ENCODE measurements at regions of chr7 and their contacts with region 1.

Region 1: DNA sequence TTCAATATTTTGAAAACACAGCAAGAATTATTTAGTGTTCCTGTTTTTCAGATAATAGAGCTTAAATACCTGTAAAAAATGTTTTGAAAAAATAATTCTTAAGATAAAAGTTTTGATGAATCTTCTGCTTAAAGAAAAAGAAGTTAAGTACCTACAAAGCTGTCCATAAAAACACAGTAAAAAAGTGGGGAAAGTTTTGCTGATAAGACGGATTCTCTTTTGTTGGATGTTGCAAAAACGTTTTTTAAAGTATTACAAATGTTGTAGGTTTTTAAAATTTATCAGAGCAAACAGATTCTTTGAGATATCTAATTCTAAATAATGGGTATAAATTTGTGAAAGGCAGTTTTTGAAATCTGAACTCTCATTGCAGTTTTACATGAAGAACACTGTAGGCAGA is 12.2 kb downstream of the DMTF1 start:
- DNase-seq: no peak
- ATAC-seq: no peak
- H3K4me3 ChIP-seq: no peak overlapping the region
- H3K27ac ChIP-seq: no peak overlapping the region
- H3K4me1 ChIP-seq: no peaks in the 10 kb centered on the region
- H3K27me3 ChIP-seq: no peaks in the 10 kb centered on the region
- CTCF ChIP-seq: no peak

Region 2: DNA sequence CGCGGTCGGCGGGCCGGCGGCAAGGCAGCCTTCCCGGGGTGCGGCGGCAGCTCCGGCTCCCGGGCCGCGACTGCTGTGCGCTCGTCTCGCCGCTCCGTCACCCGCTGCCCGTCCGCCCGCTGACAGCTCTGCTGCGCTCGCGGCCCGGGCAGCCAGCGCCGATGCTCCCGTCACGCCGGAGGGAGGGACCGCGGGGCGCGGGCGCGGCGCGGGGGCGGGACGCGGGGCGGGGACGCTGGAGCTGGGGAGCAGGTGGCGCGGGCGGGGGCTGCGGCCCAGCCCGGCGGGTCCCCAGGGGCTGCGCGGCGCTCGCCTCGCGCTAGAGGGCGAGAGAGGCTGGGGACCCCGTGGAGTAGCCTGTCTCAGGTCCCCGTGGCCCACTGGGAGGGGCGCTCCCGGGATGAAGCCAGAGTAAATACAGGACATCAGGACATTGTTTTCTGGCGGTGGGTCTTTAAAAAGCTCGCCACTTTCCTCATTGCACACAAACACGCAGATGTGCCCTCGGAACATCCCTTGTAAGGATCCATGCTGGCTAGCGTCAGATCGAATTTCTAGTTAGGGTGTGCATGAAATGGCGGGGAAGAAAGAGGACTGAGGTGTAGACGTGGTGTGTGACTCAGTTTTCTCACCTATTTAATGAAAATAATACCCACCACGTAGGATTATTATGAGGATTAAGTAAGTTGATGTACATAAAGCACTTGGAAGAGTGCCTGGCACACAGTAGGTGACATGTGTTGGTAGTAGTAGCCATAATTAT is 104.7 kb before region 1 on chr7 and contains the start of gene ELAPOR2:
- CTCF ChIA-PET with region 1: no interaction called
- POLR2A ChIA-PET with region 1: interaction called, 10 read pairs
- intact Hi-C with region 1: no loop called
- DNase-seq: peak; percentile 80
- ATAC-seq: peak; percentile 88
- H3K4me3 ChIP-seq: peak within 1 kb of the TSS; percentile 94
- H3K27ac ChIP-seq: peak within 1 kb of the TSS; percentile 22; the same call in 1 of the 2 replicates
- H3K4me1 ChIP-seq: peaks cover 10% of the 10 kb centered on the region; the same call in 1 of the 2 replicates
- H3K27me3 ChIP-seq: no peaks in the 10 kb centered on the region
- CTCF ChIP-seq: peak; percentile 44
- total RNA-seq, gene ELAPOR2: 10.2 and 14.7 TPM in 2 replicates

Region 3: GRCh38 chr7:87144173-87144657 is 20.2 kb before region 1 on chr7:
- CTCF ChIA-PET with region 1: no interaction called
- POLR2A ChIA-PET with region 1: no interaction called
- intact Hi-C with region 1: no loop called
- DNase-seq: no peak
- ATAC-seq: no peak
- H3K4me3 ChIP-seq: no peak overlapping the region
- H3K27ac ChIP-seq: no peak overlapping the region
- H3K4me1 ChIP-seq: no peaks in the 10 kb centered on the region
- H3K27me3 ChIP-seq: no peaks in the 10 kb centered on the region
- CTCF ChIP-seq: no peak

Measured in PC-3 (cell line).